Upper lobe of right lung (tissue), 1 donor: ENCODE measurements at regions of chr16 and their contacts with region 1.

Region 1: DNA sequence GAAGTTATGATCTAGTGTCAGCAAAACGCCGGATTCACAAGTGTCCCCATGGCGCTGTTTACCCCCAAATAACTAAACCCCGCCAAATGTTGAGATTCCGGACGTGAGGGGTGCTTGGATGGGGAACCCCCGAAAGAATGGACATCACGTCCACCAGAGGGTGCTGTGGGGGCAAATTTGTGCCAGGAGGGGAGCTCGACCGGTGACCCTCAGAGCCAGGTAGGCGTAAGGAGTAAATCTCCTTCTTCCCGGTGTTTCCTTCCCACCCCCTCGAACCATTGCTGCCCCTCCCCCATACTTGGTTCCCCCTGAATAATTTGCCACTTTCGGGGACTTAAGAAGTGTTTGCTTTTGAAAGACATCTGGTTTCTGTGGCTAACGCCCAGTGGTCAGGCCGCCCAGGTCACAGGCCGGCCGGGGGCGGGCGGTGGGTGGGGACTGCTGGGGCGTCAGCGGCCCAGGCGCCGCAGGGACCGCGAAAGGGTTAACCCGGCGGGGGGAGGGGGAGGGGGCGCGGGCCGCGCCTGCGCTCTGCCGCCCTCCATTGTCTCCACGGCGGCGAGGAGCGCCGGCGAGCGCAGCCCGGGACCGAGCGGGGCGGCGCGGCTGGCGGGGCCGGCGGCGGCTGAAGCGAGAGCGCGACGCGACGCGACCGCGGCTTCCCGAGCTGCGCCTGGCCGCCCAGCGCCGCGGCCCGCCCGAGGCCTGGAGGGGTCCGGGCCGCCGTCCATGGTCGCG is at the start of gene ZNRF1:
- DNase-seq: peak; percentile 92
- ATAC-seq: peak; percentile 93
- H3K4me3 ChIP-seq: peak within 1 kb of the TSS; percentile 91
- H3K27ac ChIP-seq: peak within 1 kb of the TSS; percentile 80
- H3K4me1 ChIP-seq: peaks cover 24% of the 10 kb centered on the region
- H3K27me3 ChIP-seq: no peaks in the 10 kb centered on the region
- CTCF ChIP-seq: peak; percentile 79
- total RNA-seq, gene ZNRF1: 21.3 TPM

Region 2: DNA sequence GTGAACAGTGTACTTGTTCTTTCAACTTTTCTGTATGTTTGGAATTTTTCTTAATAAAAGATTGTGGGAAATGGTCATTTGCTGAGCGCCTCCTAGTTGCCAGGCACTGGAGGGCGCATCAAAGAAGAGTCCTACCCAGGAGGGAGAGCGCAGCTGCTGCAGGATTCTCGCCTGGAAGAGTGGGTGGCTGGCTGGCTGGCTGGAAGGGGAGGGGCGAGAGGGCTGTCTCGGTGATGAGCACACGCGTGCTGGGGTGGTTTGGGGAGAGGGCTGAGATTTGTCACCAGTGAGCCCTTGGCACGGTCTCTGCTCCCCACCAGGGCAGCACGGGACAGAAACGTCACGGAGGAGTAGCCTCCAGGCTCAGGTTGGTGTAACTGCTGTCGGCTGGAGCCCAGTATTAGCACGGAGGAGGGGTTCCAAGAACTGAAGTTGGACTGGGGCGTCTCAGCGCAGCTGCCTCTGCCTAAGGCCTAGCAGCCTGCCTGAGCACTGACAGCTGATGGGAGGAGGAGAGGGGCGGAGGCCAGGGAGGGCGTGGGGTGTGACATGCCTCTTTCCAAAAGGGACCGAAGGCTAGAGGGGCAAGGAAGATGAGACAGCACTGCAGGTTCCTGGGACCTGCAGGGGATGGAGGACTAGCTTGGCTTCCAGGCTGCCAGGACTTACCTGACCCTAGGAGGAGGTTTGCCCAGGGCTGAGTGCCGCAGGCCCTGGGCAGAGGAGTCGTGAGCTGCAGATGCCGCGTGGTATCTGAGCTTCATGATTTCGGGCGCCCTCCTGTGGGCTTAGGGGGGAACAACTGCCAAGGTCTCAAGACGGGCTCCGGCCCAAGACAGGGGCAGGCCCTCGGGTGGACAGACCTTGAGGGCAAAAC is 112.2 kb after region 1 on chr16:
- intact Hi-C with region 1: loop called (anchors 5 kb)
- DNase-seq: peak; percentile 92
- ATAC-seq: peak; percentile 87
- H3K4me3 ChIP-seq: peak overlapping the region; percentile 15
- H3K27ac ChIP-seq: peak overlapping the region; percentile 74
- H3K4me1 ChIP-seq: peaks cover 54% of the 10 kb centered on the region
- H3K27me3 ChIP-seq: no peaks in the 10 kb centered on the region
- CTCF ChIP-seq: peak; percentile 91